ENCODE measurements at regions of chr3 and their contacts with region 1.

Region 1: GRCh38 chr3:45499529-45499928 is 95.0 kb upstream of the LIMD1 start:
- DNase-seq: no peak
- H3K4me3 ChIP-seq: no peak overlapping the region
- H3K27ac ChIP-seq: no peak overlapping the region
- H3K4me1 ChIP-seq: peaks cover 0 to 12% (median 11%) of the 10 kb centered on the region in 4 donors
- H3K27me3 ChIP-seq: no peaks in the 10 kb centered on the region
- CTCF ChIP-seq: peak; percentile 35 to 46 (median 42)
- EP300 ChIP-seq: no peak
- POLR2A ChIP-seq: no peak

Region 2: DNA sequence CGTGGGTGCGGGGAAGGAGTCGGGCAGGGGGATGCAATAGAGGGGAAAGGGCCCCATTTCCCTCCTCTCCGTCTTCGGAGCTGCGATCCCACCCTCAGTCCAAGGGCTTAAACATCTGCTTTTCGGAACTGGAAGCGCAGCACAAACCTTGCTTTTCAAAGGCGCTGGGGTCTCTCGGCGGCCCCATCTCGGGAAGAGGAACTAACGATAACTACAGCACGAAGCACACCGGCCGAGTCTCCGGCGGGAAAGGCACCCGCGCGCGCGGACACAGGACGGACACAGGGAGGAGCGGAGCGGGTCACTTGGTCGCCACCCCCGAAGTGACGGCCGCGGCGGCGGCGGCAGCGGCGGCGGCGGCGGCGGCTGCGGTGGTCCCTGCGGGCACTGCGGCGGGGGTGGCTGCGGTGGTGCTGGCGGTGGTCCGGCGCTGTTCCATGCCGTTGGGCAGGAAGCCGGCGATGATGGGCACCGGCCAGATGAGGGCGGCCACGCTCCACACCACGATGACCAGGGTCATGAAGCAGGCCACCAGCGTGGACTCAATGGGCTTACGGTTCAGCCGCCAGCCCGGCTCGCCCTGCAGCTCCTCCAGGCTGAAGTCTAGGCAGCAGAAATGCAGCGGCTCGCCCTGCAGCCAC is 274.6 kb before region 1 on chr3:
- intact Hi-C with region 1: loop called (anchors 2 kb)
- DNase-seq: peak; percentile 82
- H3K4me3 ChIP-seq: peak overlapping the region; percentile 26 to 73 (median 58)
- H3K27ac ChIP-seq: peak overlapping the region in 3 of 4 donors; percentile 34 to 69 (median 63)
- H3K4me1 ChIP-seq: peaks cover 0 to 23% (median 18%) of the 10 kb centered on the region in 4 donors
- H3K27me3 ChIP-seq: peaks cover 0 to 4% (median 0%) of the 10 kb centered on the region in 3 donors
- CTCF ChIP-seq: peak in 1 of 4 experiments; percentile 52
- EP300 ChIP-seq: no peak
- POLR2A ChIP-seq: no peak

Region 3: DNA sequence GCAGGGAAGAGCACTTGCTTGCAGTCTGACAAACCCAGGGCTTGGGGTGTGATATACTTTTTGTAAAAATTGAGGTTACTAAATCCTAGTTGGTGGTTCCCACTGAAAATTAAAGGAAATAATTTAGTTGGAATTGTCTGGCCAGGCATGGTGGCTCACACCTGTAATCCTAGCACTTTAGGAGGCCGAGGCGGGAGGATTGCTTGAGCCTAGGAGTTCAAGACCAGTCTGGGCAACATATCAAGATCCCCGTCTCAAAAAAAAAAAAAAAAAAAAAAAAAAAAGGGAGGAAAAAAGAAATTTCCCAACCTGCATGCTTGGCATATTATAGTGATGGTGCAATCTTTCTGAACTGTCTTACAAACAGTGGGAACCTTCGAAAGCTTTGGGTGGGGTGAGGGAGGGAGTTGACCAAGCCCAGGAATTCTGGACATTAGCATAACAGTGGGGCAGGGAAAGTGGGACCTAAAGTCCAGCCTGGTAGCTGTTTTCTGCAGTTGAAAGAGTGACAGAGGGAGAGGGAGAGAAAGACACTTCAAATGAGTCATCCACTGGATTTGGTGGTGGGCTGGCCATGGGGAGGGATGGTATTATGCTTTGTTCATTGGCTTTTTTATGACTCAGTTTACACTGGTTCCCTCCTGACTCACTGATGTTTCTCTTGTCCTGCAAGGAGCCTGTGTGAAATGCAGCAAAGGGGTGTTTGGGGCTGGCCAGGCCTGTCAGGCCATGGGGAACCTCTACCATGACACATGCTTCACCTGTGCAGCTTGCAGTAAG is 136.1 kb after region 1 on chr3:
- intact Hi-C with region 1: no loop called
- DNase-seq: no peak
- H3K4me3 ChIP-seq: no peak overlapping the region
- H3K27ac ChIP-seq: no peak overlapping the region
- H3K4me1 ChIP-seq: peaks cover 0 to 12% (median 0%) of the 10 kb centered on the region in 4 donors
- H3K27me3 ChIP-seq: no peaks in the 10 kb centered on the region
- CTCF ChIP-seq: no peak
- EP300 ChIP-seq: no peak
- POLR2A ChIP-seq: no peak